Activated CD4-positive, alpha-beta memory T cell treated with anti-CD3 and anti-CD28 coated beads, Interleukin-2, amount 10 ng/mL, durations not matched to agents 7 days and 5 days (primary cell): ENCODE measurements at regions of chr15 and their contacts with region 1.

Region 1: DNA sequence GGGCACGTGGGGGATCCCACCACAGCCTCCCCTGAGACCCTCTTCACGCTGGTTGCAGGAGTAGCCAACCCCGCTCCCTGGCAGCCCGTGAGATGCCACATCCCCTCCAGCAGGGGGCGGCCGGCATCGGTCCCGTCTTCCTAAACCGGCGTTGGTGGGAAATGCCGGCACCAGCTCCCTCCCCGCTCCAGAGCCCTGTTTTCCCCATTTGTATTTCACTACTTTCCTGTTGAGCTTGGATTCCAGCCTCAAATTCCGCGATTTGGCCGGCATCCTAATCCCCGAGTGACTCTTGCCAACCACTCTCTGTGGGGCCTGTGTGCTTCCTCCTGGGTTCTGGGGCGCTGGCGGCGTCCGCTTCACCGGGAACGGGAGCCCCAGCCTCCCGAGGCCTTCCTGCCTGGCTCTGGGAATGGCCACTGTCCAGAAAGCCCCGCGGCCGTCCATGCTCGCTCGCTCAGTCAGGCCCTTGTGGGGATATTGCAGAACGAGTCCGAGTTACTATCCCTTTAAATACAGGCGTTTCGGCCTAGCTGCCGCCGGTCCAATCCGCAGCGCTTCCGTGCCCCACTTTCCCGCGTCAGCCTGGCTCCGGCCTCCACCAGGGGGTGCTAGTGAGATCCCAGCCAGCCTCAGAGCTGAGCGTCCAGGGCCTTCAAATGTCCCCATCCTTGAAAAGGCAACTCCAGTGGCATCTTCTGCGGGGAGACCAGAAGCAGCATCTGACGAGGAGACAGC is 8.1 kb upstream of the ADAMTS17 start:
- DNase-seq: peak; percentile 90
- H3K4me3 Mint-ChIP-seq: peak overlapping the region; percentile 86
- H3K27ac Mint-ChIP-seq: peak overlapping the region; percentile 67
- H3K4me1 Mint-ChIP-seq: peaks cover 10% of the 10 kb centered on the region
- H3K27me3 Mint-ChIP-seq: peaks cover 12% of the 10 kb centered on the region

Region 2: GRCh38 chr15:100330629-100331215 is 19.1 kb before region 1 on chr15:
- CTCF ChIA-PET with region 1: interaction called, 136 read pairs
- POLR2A ChIA-PET with region 1: no interaction called
- DNase-seq: peak; percentile 49
- H3K4me3 Mint-ChIP-seq: peak overlapping the region; percentile 32
- H3K27ac Mint-ChIP-seq: peak overlapping the region; percentile 74
- H3K4me1 Mint-ChIP-seq: peaks cover 22% of the 10 kb centered on the region
- H3K27me3 Mint-ChIP-seq: no peaks in the 10 kb centered on the region

Region 3: DNA sequence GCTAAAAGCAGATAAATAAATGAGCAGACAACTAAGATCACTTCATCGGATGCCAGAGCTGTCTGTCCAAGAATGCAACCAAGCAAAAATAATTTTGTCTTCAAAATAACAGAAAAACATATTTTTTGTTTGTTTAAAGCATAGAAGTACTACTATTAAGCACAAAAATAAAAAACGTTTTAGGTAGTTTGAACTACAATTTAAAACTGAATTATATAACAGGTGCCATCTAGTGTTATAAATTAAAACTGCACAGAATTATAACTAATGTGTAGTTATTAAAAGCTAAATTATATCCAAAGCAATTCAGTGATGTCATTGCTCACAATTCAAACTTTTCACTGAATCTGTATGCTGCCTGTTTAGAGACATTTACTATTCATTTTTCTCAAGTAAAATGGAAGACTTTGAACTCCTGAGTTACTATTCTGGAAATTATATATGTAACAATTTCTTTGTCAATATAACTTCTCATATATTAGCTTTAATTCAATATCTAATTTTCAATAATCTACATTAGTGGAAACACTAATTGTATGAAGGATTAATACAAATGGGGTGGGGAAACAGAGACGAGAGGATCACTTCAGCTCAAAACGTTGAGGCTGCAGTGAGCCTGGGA is 222.6 kb after region 1 on chr15:
- CTCF ChIA-PET with region 1: interaction called, 117 read pairs
- POLR2A ChIA-PET with region 1: interaction called, 20 read pairs
- DNase-seq: no peak
- H3K4me3 Mint-ChIP-seq: peak overlapping the region; percentile 66
- H3K27ac Mint-ChIP-seq: peak overlapping the region; percentile 75
- H3K4me1 Mint-ChIP-seq: peaks cover 51% of the 10 kb centered on the region
- H3K27me3 Mint-ChIP-seq: no peaks in the 10 kb centered on the region

Region 4: GRCh38 chr15:100602064-100602822 is 252.4 kb after region 1 on chr15 and contains the starts of genes ASB7 and LINS1:
- CTCF ChIA-PET with region 1: interaction called, 42 read pairs
- POLR2A ChIA-PET with region 1: interaction called, 14 read pairs
- DNase-seq: peak; percentile 100
- H3K4me3 Mint-ChIP-seq: no peak within 1 kb of the TSS
- H3K27ac Mint-ChIP-seq: no peak within 1 kb of the TSS
- H3K4me1 Mint-ChIP-seq: peaks cover 62% of the 10 kb centered on the region
- H3K27me3 Mint-ChIP-seq: no peaks in the 10 kb centered on the region
- total RNA-seq, gene ASB7: 23.1 to 23.3 TPM
- total RNA-seq, gene LINS1: 46.1 to 49.6 TPM

Region 5: GRCh38 chr15:100627789-100628395 is 278.0 kb after region 1 on chr15:
- CTCF ChIA-PET with region 1: interaction called, 11 read pairs
- POLR2A ChIA-PET with region 1: interaction called, 3 read pairs
- DNase-seq: peak; percentile 67
- H3K4me3 Mint-ChIP-seq: no peak overlapping the region
- H3K27ac Mint-ChIP-seq: no peak overlapping the region
- H3K4me1 Mint-ChIP-seq: peaks cover 4% of the 10 kb centered on the region
- H3K27me3 Mint-ChIP-seq: no peaks in the 10 kb centered on the region

Region 6: GRCh38 chr15:101008158-101009139 is 658.6 kb after region 1 on chr15:
- CTCF ChIA-PET with region 1: interaction called, 25 read pairs
- POLR2A ChIA-PET with region 1: no interaction called
- DNase-seq: peak; percentile 87
- H3K4me3 Mint-ChIP-seq: peak overlapping the region; percentile 83
- H3K27ac Mint-ChIP-seq: no peak overlapping the region
- H3K4me1 Mint-ChIP-seq: peaks cover 23% of the 10 kb centered on the region
- H3K27me3 Mint-ChIP-seq: peaks cover 29% of the 10 kb centered on the region

Region 7: GRCh38 chr15:101156509-101157159 is 806.8 kb after region 1 on chr15:
- CTCF ChIA-PET with region 1: no interaction called
- POLR2A ChIA-PET with region 1: no interaction called
- DNase-seq: no peak
- H3K4me3 Mint-ChIP-seq: no peak overlapping the region
- H3K27ac Mint-ChIP-seq: no peak overlapping the region
- H3K4me1 Mint-ChIP-seq: peaks cover 39% of the 10 kb centered on the region
- H3K27me3 Mint-ChIP-seq: no peaks in the 10 kb centered on the region